Left cardiac atrium (tissue), 4 donors: ENCODE measurements at regions of chr10 and their contacts with region 1.

Region 1: DNA sequence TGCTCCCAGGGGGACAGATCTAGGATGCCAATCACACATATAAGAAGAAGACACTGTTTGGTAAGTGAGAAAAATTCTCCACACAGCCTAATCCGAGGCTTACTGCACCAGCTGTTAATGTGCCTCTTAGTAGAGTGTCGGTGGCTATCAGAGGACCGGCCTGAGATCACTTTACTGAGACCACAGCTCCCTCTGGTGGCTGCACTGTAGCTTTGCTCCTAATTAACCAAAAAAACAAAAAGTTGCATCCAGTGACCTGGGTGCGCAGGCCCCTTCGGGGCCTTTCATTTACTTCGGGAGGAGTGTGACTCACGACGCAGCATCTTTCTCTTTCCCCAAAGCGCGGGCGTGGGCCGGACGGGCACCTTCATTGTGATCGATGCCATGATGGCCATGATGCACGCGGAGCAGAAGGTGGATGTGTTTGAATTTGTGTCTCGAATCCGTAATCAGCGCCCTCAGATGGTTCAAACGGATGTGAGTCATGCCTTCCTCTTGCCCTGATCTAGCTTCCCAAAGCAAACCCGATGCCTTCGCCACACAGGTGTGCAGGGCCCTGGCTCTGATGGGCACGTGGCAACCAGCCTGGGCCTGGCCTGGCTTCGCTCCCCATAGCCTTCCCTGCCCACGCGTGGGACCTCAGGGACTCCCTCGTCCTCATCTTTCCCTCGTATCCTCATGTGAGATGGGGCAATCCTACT is 56.7 kb downstream of the MKI67 start:
- DNase-seq: peak; percentile 63
- ATAC-seq: peak; percentile 56 to 63

Region 2: DNA sequence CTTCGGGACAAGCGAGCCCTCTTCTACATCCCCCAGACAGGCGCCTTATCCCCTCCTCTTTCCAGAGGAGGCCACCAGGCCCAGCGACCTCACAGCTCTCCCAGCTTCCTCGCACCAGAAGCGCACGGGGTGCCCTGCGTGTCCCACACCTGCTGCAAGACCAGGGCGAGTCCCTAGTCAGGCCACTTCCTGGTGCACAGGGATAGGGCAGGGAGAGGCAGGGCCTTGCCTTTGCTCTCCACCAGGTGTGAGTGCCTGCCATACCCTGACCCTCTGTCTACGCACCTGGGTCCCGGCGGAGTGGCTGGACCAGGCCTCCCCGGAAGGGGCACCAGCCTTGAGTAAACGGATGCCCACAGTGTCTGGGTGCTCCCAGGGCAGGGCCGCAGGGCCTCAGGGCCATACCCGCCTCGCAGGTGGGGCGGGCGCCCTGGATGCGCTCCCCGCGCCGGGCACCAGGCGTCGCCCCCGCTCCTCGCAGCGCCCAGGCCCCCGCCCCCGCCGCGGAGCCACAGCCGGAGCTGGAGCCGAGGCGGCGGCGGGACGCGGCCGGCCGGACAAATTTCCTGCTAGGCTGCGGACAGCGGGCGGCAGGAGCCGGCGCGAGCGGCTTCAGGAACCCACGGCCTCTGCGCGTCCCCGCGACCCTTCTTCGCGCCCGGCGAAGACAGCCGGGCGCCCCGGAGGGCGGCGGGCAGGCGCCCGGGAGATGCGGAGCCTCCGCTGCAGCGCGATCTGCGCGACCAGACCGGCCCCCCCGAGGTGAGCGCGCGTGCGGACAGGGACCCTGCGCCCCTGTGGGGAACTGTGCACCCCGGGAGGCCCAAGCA is 162.7 kb before region 1 on chr10 and contains the start of gene PTPRE:
- intact Hi-C with region 1: loop called (anchors 2 to 5 kb)
- DNase-seq: peak; percentile 85
- ATAC-seq: peak; percentile 86 to 92
- total RNA-seq, gene PTPRE: 14.2 to 24.3 TPM

Region 3: DNA sequence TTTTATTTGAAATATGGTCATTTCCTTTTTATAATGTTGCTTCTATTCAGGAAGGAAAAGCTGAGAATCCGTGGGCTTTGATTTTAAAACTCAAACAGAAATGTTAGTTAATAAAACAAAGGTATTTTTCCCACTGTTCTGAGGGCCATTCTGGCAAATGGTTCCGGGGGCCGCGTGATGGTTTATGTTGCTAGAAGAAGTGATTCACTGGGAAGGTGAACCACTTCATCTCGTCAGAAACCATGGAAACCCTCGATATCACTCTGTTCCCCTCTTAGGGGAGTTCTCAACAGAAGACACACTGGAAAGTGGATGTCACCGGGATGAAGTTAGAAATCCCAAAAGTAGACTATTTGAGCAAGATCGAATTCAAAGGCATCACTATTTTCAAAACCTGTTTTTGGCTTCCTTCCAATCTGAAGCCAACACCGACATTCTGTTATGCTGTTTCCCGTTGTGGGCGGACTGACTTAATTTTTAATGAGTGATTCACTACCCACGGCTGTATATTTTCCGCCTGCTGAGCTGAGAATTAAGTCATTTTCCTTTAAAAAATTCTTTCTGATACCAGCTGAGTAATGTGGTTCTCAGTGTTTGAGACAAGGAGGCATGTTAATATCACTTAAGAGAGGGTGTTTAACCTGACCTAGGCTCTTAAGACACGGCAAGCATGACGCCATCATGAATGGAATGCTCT is 78.5 kb before region 1 on chr10:
- intact Hi-C with region 1: no loop called
- DNase-seq: no peak
- ATAC-seq: peak; percentile 58 to 89

Region 4: GRCh38 chr10:128011175-128011979 is 58.1 kb before region 1 on chr10:
- intact Hi-C with region 1: loop called in 1 of 2 experiments (anchors 10 kb)
- DNase-seq: peak; percentile 85
- ATAC-seq: peak; percentile 87 to 89

Region 5: DNA sequence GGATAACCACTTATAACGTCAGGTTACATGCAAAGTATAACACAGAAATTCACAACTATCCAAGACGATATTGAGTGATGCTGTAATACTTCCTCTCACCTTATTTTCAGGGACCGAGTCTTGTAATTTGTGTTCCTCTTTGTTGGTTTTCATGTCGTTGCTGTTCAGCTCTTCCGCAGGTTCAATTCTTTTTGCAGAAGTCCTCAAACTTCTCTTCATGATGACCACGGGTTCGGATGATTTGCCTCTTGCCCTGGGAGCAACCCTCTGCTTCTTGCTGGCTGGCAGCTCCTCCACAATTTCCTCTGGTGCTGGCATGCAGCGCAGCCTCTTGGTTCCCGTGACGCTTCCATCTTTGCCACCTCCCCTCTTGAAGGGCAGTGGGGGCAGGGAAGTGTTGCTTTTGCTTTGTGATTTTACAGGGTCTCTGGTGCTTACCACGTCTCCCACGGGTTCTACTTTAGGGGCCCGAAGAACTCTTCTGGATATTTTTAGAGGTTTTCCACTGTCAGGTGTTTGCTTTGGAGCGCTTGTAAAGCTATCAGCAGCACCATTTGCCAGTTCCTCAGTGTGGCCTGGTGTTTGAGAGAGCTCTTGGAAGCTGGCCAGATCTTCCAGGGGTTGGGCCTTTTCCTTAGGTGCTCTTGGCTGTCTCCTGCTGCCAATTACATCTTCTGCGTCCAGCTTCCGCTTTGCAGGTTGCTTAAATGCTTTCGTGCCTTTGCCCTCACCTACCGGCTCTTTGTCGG is 33.2 kb after region 1 on chr10:
- intact Hi-C with region 1: no loop called
- DNase-seq: no peak
- ATAC-seq: peak in 1 of 2 donors; percentile 27